ENCODE measurements at regions of chr5 and their contacts with region 1.

Region 1: GRCh38 chr5:34656001-34656699 is at the start of gene RAI14:
- DNase-seq: peak; percentile 93
- H3K4me3 ChIP-seq: peak within 1 kb of the TSS; percentile 96 to 99 (median 98)
- H3K27ac ChIP-seq: peak within 1 kb of the TSS; percentile 96
- H3K4me1 ChIP-seq: peaks cover 53% of the 10 kb centered on the region
- H3K27me3 ChIP-seq: no peaks in the 10 kb centered on the region
- CTCF ChIP-seq: peak; percentile 8 to 24
- POLR2A ChIP-seq: peak; percentile 87
- total RNA-seq, gene RAI14: 369 and 390 TPM in 2 replicates

Region 2: DNA sequence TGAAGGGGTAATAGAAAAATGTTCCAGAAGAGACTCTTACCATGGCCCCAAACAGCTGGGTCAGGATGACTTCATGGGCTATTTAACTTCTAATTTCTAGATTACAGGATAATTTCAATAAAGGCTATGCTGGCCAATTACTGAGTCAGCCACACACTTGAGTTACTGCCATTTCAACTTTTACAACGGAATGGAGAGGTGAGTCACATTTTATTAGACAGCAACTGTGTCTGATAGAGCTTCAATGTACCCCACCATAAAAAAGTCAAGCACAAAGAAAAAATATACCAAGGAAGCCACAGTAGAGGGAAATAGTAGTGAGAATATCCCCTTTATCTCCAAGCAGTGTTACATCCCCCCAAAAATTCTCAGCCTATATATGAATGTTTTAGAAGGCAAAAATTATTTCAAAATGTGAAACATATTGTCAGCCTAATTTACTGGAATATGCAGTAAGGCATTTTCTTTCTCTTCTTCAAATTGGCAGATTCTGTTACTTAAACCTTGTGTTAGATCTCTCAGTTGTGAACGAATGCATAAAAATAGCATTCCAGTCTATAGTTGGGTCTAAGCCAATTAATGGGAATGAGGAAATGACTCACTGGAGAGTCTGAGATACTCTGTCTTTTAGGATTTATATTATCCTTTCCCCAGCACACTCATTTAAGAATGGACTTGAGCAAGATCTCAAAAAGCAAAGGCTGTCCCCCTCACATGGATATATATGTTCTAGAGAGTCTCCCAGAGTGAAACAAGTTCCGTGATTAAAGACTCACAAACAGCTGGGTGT is 47.1 kb before region 1 on chr5:
- CTCF ChIA-PET with region 1: interaction called, 9 read pairs
- POLR2A ChIA-PET with region 1: no interaction called
- dilution Hi-C with region 1: no loop called
- intact Hi-C with region 1: loop called (anchors 1 kb)
- DNase-seq: peak; percentile 95
- H3K4me3 ChIP-seq: peak overlapping the region in 1 of 3 experiments; percentile 25
- H3K27ac ChIP-seq: peak overlapping the region; percentile 99
- H3K4me1 ChIP-seq: peaks cover 31% of the 10 kb centered on the region
- H3K27me3 ChIP-seq: no peaks in the 10 kb centered on the region
- CTCF ChIP-seq: no peak
- POLR2A ChIP-seq: no peak

Region 3: DNA sequence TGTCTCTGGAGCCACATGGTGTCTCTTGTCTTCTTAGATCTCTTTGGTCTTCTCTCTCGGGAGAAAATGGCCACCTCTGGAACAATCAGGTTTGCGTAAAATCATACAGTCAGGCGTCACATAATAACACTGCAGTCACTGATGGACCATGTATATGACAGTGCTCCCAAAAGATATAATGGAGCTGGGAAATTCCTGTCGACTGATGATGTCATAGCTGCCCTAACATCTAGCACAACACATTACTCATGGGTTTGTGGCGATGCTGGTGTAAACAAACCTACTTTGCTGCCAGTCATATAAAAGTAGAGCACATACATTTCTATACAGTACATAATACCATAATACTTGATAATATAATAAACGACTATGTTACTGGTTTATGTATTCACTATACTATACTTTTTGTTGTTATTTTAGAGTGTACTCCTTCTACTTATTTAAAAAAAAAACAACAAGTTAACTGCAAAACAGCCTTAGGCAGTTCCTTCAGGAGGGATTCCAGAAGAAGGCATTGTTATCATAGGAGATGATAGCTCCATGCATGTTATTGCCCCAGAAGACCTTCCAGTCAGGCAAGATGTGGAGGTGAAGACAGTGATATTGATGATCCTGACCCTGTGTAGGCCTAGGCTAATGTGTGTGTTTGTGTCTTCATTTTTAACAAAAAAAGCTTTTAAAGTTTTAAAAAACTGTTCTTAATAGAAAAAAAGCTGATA is 30.0 kb before region 1 on chr5:
- CTCF ChIA-PET with region 1: interaction called, 11 read pairs
- POLR2A ChIA-PET with region 1: interaction called, 14 read pairs
- dilution Hi-C with region 1: no loop called
- intact Hi-C with region 1: loop called (anchors 1 kb)
- DNase-seq: peak; percentile 88
- H3K4me3 ChIP-seq: no peak overlapping the region
- H3K27ac ChIP-seq: peak overlapping the region; percentile 78
- H3K4me1 ChIP-seq: peaks cover 44% of the 10 kb centered on the region
- H3K27me3 ChIP-seq: no peaks in the 10 kb centered on the region
- CTCF ChIP-seq: no peak
- POLR2A ChIP-seq: no peak

Region 4: GRCh38 chr5:34686762-34687268 is 30.7 kb after region 1 on chr5:
- CTCF ChIA-PET with region 1: interaction called, 4 read pairs
- POLR2A ChIA-PET with region 1: interaction called, 8 read pairs
- dilution Hi-C with region 1: no loop called
- intact Hi-C with region 1: loop called (anchors 1 kb)
- DNase-seq: peak; percentile 97
- H3K4me3 ChIP-seq: peak overlapping the region in 1 of 3 experiments; percentile 12
- H3K27ac ChIP-seq: peak overlapping the region; percentile 80
- H3K4me1 ChIP-seq: peaks cover 63% of the 10 kb centered on the region
- H3K27me3 ChIP-seq: no peaks in the 10 kb centered on the region
- CTCF ChIP-seq: peak in 1 of 2 donors; percentile 6
- POLR2A ChIP-seq: no peak

Region 5: GRCh38 chr5:34717426-34718327 is 61.5 kb after region 1 on chr5:
- CTCF ChIA-PET with region 1: interaction called, 4 read pairs
- POLR2A ChIA-PET with region 1: no interaction called
- dilution Hi-C with region 1: no loop called
- intact Hi-C with region 1: loop called (anchors 1 kb)
- DNase-seq: peak; percentile 96
- H3K4me3 ChIP-seq: peak overlapping the region in 1 of 3 experiments; percentile 25
- H3K27ac ChIP-seq: peak overlapping the region; percentile 96
- H3K4me1 ChIP-seq: peaks cover 70% of the 10 kb centered on the region
- H3K27me3 ChIP-seq: no peaks in the 10 kb centered on the region
- CTCF ChIP-seq: no peak
- POLR2A ChIP-seq: peak; percentile 18

Region 6: GRCh38 chr5:34789021-34789531 is 132.9 kb after region 1 on chr5:
- CTCF ChIA-PET with region 1: no interaction called
- POLR2A ChIA-PET with region 1: no interaction called
- dilution Hi-C with region 1: no loop called
- intact Hi-C with region 1: loop called (anchors 5 kb)
- DNase-seq: peak; percentile 95
- H3K4me3 ChIP-seq: no peak overlapping the region
- H3K27ac ChIP-seq: peak overlapping the region; percentile 81
- H3K4me1 ChIP-seq: peaks cover 46% of the 10 kb centered on the region
- H3K27me3 ChIP-seq: no peaks in the 10 kb centered on the region
- CTCF ChIP-seq: no peak
- POLR2A ChIP-seq: peak; percentile 84

Region 7: DNA sequence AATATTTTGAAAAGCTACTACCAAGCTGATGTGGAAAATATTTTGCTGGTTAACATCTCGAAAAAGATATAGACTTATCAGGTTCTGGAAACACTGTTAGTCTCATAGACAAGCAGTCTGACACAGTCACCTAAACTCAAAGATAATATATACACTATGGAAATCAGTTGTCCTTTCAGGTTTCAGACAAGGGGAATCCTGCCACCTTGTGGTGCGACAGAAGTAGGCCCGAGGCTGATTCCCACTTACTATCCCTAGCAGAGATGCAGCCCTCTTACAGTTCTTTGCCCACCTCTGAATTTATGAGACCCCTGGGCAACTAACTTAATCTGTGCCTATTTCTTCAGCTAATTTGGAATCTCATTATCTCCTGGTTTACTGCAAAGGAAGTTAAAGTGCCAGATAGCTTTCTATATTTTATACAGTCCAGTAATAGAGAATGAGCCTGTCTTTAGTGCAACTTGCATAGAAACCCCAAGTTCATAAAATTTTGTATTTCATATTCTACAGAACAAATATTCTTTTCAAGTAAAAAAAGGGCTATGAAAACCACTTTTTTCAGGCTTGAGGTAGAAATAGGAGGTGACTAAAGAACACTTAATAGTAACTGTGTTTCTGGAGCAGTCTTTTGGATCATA is 242.2 kb after region 1 on chr5:
- CTCF ChIA-PET with region 1: no interaction called
- POLR2A ChIA-PET with region 1: no interaction called
- dilution Hi-C with region 1: no loop called
- intact Hi-C with region 1: loop called (anchors 2 kb)
- DNase-seq: peak; percentile 74
- H3K4me3 ChIP-seq: no peak overlapping the region
- H3K27ac ChIP-seq: no peak overlapping the region
- H3K4me1 ChIP-seq: no peaks in the 10 kb centered on the region
- H3K27me3 ChIP-seq: no peaks in the 10 kb centered on the region
- CTCF ChIP-seq: peak; percentile 83 to 84
- POLR2A ChIP-seq: no peak

Region 8: DNA sequence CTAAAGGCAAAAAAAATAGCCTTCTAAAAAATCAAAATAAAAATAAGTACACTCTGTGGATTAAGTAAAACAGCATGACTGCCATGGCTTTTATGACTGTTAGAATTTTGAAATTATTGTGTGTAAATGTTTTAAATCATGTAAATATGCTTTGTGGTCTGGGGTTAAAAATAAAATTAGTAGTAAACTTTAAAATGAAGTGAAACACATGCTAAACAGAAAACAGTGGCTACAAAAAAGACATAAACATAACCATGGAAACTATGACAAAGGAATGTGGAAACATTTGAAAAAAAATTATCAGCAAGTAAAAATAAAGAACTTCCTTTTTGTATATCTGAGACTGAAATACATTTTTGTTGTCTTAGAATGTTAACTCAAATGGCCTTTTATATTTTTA is 827.0 kb after region 1 on chr5:
- CTCF ChIA-PET with region 1: no interaction called
- POLR2A ChIA-PET with region 1: no interaction called
- dilution Hi-C with region 1: no loop called
- intact Hi-C with region 1: no loop called
- DNase-seq: peak; percentile 15
- H3K4me3 ChIP-seq: no peak overlapping the region
- H3K27ac ChIP-seq: no peak overlapping the region
- H3K4me1 ChIP-seq: no peaks in the 10 kb centered on the region
- H3K27me3 ChIP-seq: no peaks in the 10 kb centered on the region
- CTCF ChIP-seq: no peak
- POLR2A ChIP-seq: no peak